Ascending aorta (tissue), 2 donors: ENCODE measurements at regions of chr13 and their contacts with region 1.

Region 1: DNA sequence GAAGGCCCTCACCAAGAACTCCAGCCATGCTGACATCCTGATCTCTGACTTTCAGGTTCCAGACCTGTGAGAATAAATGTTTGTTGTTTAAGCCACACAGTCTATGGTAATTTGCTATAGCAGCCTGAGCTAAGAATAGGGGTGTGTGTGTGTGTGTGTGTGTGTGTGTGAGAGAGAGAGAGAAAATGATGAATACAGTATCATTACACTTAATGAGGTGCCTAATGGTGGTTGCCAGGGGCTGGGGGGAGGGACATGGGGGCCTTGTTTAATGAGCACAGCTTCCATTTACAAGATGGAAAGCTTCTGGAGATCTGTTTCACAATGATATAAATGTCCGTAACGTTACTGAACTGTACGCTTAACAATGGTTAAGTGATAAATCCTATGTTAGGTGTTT is 53.8 kb upstream of the LATS2 start:
- DNase-seq: no peak
- H3K4me3 ChIP-seq: no peak overlapping the region
- H3K27ac ChIP-seq: no peak overlapping the region
- H3K4me1 ChIP-seq: no peaks in the 10 kb centered on the region
- H3K27me3 ChIP-seq: no peaks in the 10 kb centered on the region
- CTCF ChIP-seq: no peak

Region 2: GRCh38 chr13:20969182-20969581 is 146.0 kb before region 1 on chr13:
- intact Hi-C with region 1: loop called (anchors 10 kb)
- DNase-seq: no peak
- H3K4me3 ChIP-seq: no peak overlapping the region
- H3K27ac ChIP-seq: no peak overlapping the region
- H3K4me1 ChIP-seq: no peaks in the 10 kb centered on the region
- H3K27me3 ChIP-seq: no peaks in the 10 kb centered on the region
- CTCF ChIP-seq: no peak

Region 3: DNA sequence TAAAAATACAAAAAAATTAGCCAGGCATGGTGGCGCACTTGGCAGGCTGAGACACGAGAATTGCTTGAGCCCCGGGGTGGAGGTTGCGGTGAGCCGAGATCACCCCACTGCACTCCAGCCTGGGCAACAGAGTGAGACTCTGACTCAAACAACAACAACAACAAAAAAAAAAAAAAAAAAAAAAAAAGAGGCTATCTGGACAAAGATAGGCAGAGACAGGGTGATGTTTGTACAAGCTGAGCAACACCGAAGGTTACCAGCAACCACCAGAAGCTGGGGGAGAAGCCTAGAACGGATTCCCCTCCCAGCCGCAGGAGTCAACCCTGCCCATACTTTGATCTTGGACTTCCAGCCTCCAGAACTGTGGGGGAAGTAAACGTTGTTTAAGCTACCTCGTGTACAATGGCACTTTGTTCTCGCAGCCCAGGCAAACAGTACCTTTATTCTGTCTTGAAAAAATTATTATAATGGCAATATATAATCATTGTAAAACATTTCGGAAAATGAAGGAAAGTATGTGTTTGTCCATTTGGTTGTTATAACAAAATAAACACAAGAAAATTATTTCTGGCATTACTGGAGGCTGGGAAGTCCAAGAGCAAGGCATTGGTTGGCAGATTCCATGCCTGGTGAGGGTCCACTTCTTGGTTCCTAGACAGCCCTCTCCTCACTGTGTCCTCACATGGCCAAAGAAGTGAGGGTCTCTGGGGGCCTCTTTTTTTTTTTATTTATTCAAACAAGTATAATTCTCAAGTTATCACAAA is 14.1 kb before region 1 on chr13:
- intact Hi-C with region 1: no loop called
- DNase-seq: peak in 1 of 2 donors; percentile 7
- H3K4me3 ChIP-seq: no peak overlapping the region
- H3K27ac ChIP-seq: no peak overlapping the region
- H3K4me1 ChIP-seq: no peaks in the 10 kb centered on the region
- H3K27me3 ChIP-seq: no peaks in the 10 kb centered on the region
- CTCF ChIP-seq: no peak

Region 4: DNA sequence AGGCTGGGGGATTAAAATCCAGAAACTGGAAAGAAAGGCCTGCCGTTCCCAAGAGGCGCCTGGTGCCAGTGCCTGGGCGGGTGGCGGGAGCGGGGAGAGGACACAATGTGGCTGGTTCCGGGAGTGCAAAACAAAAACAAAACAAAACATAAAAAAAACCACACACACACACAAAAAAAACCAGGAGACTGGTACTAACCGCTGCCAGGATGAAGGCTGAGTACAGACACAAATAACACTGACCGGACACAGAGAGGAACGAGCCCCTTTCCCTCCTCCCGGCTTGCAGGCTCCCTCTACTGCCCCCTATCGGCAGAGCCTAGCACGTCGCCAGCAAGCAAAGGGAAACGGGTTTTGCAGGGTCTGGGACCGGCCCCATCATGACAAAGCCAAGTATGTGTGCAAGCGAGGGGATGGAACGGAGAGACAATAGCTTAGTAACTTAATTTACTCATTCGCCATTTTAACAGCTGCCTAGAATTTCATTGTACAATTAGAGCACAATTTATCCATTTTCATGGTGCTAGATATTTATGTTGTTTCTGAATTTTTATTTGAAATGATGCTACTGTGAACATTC is 361.8 kb after region 1 on chr13:
- intact Hi-C with region 1: loop called (anchors 2 kb)
- DNase-seq: peak in 1 of 2 donors; percentile 87
- H3K4me3 ChIP-seq: peak overlapping the region; percentile 24 to 53
- H3K27ac ChIP-seq: no peak overlapping the region
- H3K4me1 ChIP-seq: peaks cover 0 to 4% of the 10 kb centered on the region in 2 donors
- H3K27me3 ChIP-seq: no peaks in the 10 kb centered on the region
- CTCF ChIP-seq: peak; percentile 80 to 93 (median 90)